ENCODE measurements at regions of chr12 and their contacts with region 1.

Region 1: GRCh38 chr12:87274594-87275245 is 754.5 kb downstream of the C12orf50 start:
- DNase-seq: peak; percentile 50
- ATAC-seq: peak; percentile 77
- H3K4me3 ChIP-seq: no peak overlapping the region
- H3K27ac ChIP-seq: no peak overlapping the region
- H3K4me1 ChIP-seq: peaks cover 8% of the 10 kb centered on the region
- H3K27me3 ChIP-seq: no peaks in the 10 kb centered on the region
- CTCF ChIP-seq: peak; percentile 80

Region 2: GRCh38 chr12:87259391-87259790 is 15.3 kb before region 1 on chr12:
- CTCF ChIA-PET with region 1: no interaction called
- POLR2A ChIA-PET with region 1: no interaction called
- intact Hi-C with region 1: no loop called
- DNase-seq: peak; percentile 20
- ATAC-seq: peak; percentile 89
- H3K4me3 ChIP-seq: no peak overlapping the region
- H3K27ac ChIP-seq: no peak overlapping the region
- H3K4me1 ChIP-seq: peaks cover 10% of the 10 kb centered on the region
- H3K27me3 ChIP-seq: no peaks in the 10 kb centered on the region
- CTCF ChIP-seq: no peak

Region 3: GRCh38 chr12:87311206-87311605 is 36.5 kb after region 1 on chr12:
- CTCF ChIA-PET with region 1: no interaction called
- POLR2A ChIA-PET with region 1: no interaction called
- intact Hi-C with region 1: loop called (anchors 5 kb)
- DNase-seq: no peak
- ATAC-seq: no peak
- H3K4me3 ChIP-seq: no peak overlapping the region
- H3K27ac ChIP-seq: no peak overlapping the region
- H3K4me1 ChIP-seq: no peaks in the 10 kb centered on the region
- H3K27me3 ChIP-seq: no peaks in the 10 kb centered on the region
- CTCF ChIP-seq: no peak